ENCODE measurements at regions of chr11 and their contacts with region 1.

Region 1: DNA sequence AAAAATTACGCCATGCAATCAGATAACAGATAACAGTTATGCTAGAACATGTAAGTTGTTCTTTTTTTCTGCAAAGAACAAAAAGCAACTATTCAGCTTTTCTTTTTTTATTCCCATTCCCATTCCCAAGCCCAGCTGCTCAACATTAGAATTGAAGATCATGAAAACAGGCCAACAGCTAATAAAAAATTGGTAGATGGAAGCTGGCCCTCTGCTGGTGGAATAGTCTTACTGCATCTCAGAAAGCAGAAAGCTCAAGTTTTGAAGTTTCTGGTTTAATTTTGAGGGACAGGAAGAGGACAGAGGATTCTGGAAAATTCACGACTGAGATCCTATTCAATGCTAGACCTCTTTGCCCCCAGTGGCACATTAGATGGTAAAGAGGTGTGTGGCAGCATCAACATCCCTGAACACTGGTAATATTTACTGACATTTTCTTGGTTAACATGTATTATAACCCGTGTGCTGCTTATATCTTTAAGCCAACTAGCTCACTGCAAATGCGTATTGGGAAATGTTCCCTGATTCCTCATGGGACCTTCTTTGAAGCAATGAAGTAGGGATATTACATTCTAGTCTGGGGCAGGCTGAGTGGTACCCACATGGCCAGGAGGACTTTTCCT is 591.2 kb downstream of the OPCML start:
- DNase-seq: peak; percentile 14
- H3K4me3 ChIP-seq: no peak overlapping the region
- H3K27ac ChIP-seq: no peak overlapping the region
- H3K4me1 ChIP-seq: no peaks in the 10 kb centered on the region
- H3K27me3 ChIP-seq: peaks cover 9% of the 10 kb centered on the region
- CTCF ChIP-seq: peak; percentile 86

Region 2: GRCh38 chr11:131748151-131749050 is 1192.7 kb before region 1 on chr11:
- CTCF ChIA-PET with region 1: no interaction called
- dilution Hi-C with region 1: no loop called
- in situ Hi-C with region 1: no loop called
- intact Hi-C with region 1: loop called (anchors 10 kb)
- DNase-seq: peak; percentile 42
- H3K4me3 ChIP-seq: no peak overlapping the region
- H3K27ac ChIP-seq: no peak overlapping the region
- H3K4me1 ChIP-seq: peaks cover 6% of the 10 kb centered on the region
- H3K27me3 ChIP-seq: no peaks in the 10 kb centered on the region
- CTCF ChIP-seq: peak; percentile 85 to 92

Region 3: GRCh38 chr11:132402071-132402684 is 539.0 kb before region 1 on chr11:
- CTCF ChIA-PET with region 1: no interaction called
- dilution Hi-C with region 1: no loop called
- in situ Hi-C with region 1: no loop called
- intact Hi-C with region 1: loop called (anchors 10 kb)
- DNase-seq: peak; percentile 39
- H3K4me3 ChIP-seq: no peak overlapping the region
- H3K27ac ChIP-seq: no peak overlapping the region
- H3K4me1 ChIP-seq: no peaks in the 10 kb centered on the region
- H3K27me3 ChIP-seq: no peaks in the 10 kb centered on the region
- CTCF ChIP-seq: peak; percentile 62 to 71

Region 4: GRCh38 chr11:132803436-132803835 is 137.7 kb before region 1 on chr11:
- CTCF ChIA-PET with region 1: interaction called, 12 read pairs
- dilution Hi-C with region 1: no loop called
- in situ Hi-C with region 1: no loop called
- intact Hi-C with region 1: loop called (anchors 1 kb)
- DNase-seq: peak; percentile 71
- H3K4me3 ChIP-seq: no peak overlapping the region
- H3K27ac ChIP-seq: no peak overlapping the region
- H3K4me1 ChIP-seq: peaks cover 11% of the 10 kb centered on the region
- H3K27me3 ChIP-seq: no peaks in the 10 kb centered on the region
- CTCF ChIP-seq: peak; percentile 15 to 47

Region 5: DNA sequence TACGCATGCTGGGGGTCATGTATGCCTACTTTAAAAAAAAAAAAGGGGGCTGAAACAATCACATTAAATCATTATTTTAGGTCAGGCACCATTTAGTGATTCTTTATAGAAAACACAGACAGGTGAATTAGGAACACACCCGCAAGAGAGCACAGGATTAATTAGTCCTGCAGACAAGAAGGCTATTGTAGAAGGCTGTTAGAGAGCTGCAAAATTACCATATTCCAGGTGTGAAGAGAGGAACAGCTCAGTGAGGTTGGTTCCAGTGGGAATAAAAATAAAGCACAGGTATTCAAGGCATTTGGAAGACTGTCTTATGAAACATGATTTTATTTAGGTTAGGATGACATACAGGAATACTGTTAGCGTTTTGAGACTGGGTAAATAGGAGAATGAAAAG is 57.9 kb before region 1 on chr11:
- CTCF ChIA-PET with region 1: no interaction called
- dilution Hi-C with region 1: no loop called
- in situ Hi-C with region 1: no loop called
- intact Hi-C with region 1: no loop called
- DNase-seq: no peak
- H3K4me3 ChIP-seq: no peak overlapping the region
- H3K27ac ChIP-seq: no peak overlapping the region
- H3K4me1 ChIP-seq: peaks cover 6% of the 10 kb centered on the region
- H3K27me3 ChIP-seq: no peaks in the 10 kb centered on the region
- CTCF ChIP-seq: no peak

Region 6: GRCh38 chr11:132895340-132895739 is 45.8 kb before region 1 on chr11:
- CTCF ChIA-PET with region 1: no interaction called
- dilution Hi-C with region 1: no loop called
- in situ Hi-C with region 1: no loop called
- intact Hi-C with region 1: no loop called
- DNase-seq: peak; percentile 86
- H3K4me3 ChIP-seq: no peak overlapping the region
- H3K27ac ChIP-seq: no peak overlapping the region
- H3K4me1 ChIP-seq: no peaks in the 10 kb centered on the region
- H3K27me3 ChIP-seq: no peaks in the 10 kb centered on the region
- CTCF ChIP-seq: no peak

Region 7: GRCh38 chr11:133047036-133047770 is 106.1 kb after region 1 on chr11:
- CTCF ChIA-PET with region 1: no interaction called
- dilution Hi-C with region 1: no loop called
- in situ Hi-C with region 1: no loop called
- intact Hi-C with region 1: no loop called
- DNase-seq: no peak
- H3K4me3 ChIP-seq: no peak overlapping the region
- H3K27ac ChIP-seq: no peak overlapping the region
- H3K4me1 ChIP-seq: no peaks in the 10 kb centered on the region
- H3K27me3 ChIP-seq: peaks cover 3% of the 10 kb centered on the region
- CTCF ChIP-seq: no peak

Region 8: DNA sequence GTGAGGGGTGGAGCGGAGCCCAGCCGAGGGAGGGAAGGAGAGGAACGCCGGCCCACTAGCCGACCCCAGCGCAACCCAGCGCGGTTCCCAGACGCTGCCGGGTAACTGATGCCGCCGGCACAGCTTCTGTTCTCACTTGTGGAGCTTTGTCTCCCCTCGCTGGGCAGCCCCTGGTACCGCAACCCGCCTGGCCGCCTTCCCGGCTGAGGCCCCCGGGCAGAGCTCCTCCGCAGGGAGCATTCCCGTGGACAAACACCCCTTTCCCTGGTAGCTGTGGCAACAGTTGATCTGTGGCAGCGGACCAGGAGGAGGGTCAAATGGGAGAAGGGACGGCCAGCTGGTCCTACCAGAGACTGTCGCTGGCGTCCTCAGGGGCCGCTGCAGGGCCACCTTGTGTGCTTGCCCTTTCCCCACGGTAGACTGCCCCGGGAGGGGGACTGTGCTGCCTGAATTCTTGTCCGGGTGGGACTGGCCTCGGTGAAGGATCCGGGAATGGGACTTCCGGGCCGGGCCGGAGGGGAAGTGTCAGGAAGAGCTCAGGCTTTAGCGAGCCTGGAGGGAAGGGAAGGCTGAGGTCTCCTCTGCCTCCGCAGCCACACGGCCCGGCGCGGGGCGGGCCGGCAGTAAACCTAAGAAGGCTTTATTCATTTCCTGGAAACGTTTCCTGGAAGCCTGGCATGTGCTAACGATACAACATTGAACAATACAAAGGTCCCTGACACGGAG is 123.2 kb after region 1 on chr11:
- CTCF ChIA-PET with region 1: interaction called, 3 read pairs
- dilution Hi-C with region 1: no loop called
- in situ Hi-C with region 1: no loop called
- intact Hi-C with region 1: loop called (anchors 2 kb)
- DNase-seq: peak; percentile 30
- H3K4me3 ChIP-seq: peak overlapping the region; percentile 52 to 58 (median 57)
- H3K27ac ChIP-seq: no peak overlapping the region
- H3K4me1 ChIP-seq: peaks cover 11% of the 10 kb centered on the region
- H3K27me3 ChIP-seq: no peaks in the 10 kb centered on the region
- CTCF ChIP-seq: peak; percentile 58 to 82

Measured in mammary epithelial cell (primary cell).